ENCODE measurements at regions of chr13 and their contacts with region 1.

Region 1: DNA sequence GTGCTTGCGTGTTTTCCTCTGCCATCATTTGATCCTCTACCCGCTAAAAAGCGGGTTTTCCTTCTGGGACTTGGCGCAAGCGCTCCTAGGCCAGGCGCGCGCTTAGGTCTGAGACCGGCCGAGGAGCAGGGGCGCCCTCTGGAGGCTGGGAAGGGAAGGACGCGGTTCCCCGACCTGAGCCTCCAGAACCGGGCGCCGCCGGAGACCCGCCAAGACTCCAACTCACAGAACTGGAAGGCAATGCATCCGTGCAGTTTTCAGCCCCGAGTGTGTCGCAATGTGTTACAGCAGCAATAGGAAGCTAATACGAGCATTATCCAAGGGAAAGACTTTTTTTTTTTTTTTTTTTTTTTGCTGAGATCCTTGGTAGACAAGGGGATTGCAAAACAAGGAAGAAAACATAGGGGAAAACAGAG is 190.9 kb downstream of the COL4A1 start:
- DNase-seq: peak in 2 of 3 donors; percentile 76 to 77
- ATAC-seq: peak; percentile 92
- H3K4me3 ChIP-seq: no peak overlapping the region
- H3K4me1 ChIP-seq: no peaks in the 10 kb centered on the region
- CTCF ChIP-seq: peak; percentile 61

Region 2: GRCh38 chr13:108961542-108962125 is 1154.4 kb before region 1 on chr13:
- intact Hi-C with region 1: loop called in 1 of 2 experiments (anchors 10 kb)
- DNase-seq: no peak
- ATAC-seq: peak; percentile 84
- H3K4me3 ChIP-seq: no peak overlapping the region
- H3K4me1 ChIP-seq: no peaks in the 10 kb centered on the region
- CTCF ChIP-seq: peak; percentile 57

Region 3: DNA sequence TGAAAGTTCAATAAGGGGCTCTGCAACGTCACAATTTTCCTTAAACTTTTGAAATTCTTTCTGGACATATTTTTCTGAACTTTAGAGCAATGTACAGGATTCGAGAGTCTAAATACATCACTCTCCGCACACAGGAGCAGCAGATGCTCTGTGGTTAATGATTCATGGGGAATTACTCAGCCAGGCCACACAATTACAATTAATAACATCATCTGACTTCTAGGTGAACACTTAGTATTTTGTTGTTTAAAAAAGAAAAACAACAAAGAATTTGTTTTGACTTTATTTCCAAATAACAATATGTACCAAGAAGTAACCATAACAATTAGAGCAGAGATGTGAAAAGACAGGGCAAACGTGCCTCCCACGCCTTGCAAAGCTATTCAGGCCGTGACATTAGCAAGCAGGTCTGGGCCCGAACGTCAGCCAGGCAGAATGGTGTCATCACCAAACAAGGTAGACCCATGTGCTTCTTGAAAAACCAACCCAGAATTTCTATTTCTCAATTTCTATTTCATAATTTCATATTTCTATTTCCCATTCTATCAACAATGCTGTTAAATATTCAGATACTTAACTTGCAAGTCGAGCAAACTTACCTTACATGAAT is 45.5 kb before region 1 on chr13:
- intact Hi-C with region 1: no loop called
- DNase-seq: no peak
- ATAC-seq: no peak
- H3K4me3 ChIP-seq: no peak overlapping the region
- H3K4me1 ChIP-seq: no peaks in the 10 kb centered on the region
- CTCF ChIP-seq: no peak

Region 4: GRCh38 chr13:110387391-110388107 is 271.5 kb after region 1 on chr13:
- intact Hi-C with region 1: no loop called
- DNase-seq: peak in 2 of 3 donors; percentile 29 to 55
- ATAC-seq: peak; percentile 63
- H3K4me3 ChIP-seq: no peak overlapping the region
- H3K4me1 ChIP-seq: no peaks in the 10 kb centered on the region
- CTCF ChIP-seq: no peak

Measured in mucosa of descending colon (tissue), 3 donors.